OCI-LY7 (cell line): ENCODE measurements at regions of chr2 and their contacts with region 1.

Region 1: DNA sequence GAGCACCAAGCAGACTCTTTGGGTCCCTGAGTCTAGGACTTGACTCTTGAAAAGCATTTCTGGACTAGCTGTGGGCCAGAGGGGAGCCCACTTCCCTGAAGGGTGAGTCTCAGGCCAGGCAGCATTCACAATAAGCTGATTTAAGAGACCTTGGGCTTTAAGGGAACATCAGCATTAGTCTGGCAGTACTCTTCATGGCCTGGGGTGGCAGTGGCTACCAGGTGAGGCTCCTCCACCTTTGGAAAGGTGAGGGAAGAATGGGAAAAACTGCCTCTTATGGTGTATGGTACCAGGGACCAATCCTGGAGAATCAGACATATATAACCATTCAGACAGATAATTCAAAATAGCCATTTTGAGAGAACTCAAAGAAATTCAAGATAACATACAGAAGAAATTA is 599.9 kb upstream of the POU3F3 start:
- DNase-seq: no peak
- H3K4me3 ChIP-seq: no peak overlapping the region
- H3K27ac ChIP-seq: no peak overlapping the region
- H3K4me1 ChIP-seq: no peaks in the 10 kb centered on the region
- CTCF ChIP-seq: 0 out of 2 replicates have a peak, but pooled peaks have one; percentile 22

Region 2: GRCh38 chr2:103520547-103520946 is 733.5 kb before region 1 on chr2:
- CTCF ChIA-PET with region 1: no interaction called
- POLR2A ChIA-PET with region 1: no interaction called
- intact Hi-C with region 1: loop called (anchors 5 kb)
- DNase-seq: no peak
- H3K4me3 ChIP-seq: no peak overlapping the region
- H3K27ac ChIP-seq: no peak overlapping the region
- H3K4me1 ChIP-seq: no peaks in the 10 kb centered on the region
- CTCF ChIP-seq: no peak